H1 (cell line): ENCODE measurements at regions of chr15 and their contacts with region 1.

Region 1: DNA sequence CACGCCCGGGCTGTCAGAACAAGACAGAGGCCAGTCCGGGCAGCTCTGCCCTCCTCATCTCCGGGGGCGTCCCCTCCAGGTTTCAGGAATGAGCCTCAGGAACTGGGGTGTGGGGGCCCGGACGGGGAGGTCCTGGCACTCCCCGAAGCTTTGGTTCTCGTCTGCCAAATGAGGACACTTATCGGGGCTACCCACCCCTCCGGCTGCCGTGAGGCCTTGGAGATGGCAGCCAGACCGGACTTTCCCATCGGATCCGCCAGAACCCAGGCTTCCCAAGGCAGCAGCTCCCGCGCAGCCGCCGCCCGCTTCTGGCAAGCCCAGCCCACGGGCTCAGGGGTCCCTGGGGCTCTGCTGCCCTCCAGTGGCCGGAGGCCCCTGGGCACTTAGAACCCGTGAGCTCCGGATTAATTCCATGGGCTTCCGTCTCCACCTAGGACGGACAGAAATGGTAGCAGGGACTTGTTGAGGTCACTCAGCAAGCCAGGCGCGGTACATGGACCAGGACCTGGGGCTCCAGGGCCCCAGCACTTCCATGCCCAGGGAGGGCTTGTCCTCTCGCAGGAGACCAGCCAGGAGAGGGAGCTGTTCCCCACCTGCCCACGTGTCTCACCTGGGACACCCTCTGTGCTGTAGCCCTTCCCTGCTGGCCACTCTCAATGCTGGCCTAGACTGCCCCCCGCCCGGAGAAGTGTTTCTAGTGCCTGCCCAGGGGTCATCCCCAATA is 89.4 kb downstream of the LINGO1 start:
- DNase-seq: peak; percentile 72 to 93
- H3K4me3 ChIP-seq: peak overlapping the region in 1 of 4 experiments; percentile 15; a peak in 1 of 8 replicates
- H3K27ac ChIP-seq: no peak overlapping the region
- H3K4me1 ChIP-seq: peaks cover 2 to 15% (median 6%) of the 10 kb centered on the region in 4 experiments
- H3K27me3 ChIP-seq: no peaks in the 10 kb centered on the region
- CTCF ChIP-seq: peak; percentile 64 to 96 (median 95)
- EP300 ChIP-seq: no peak
- POLR2A ChIP-seq: no peak
- RAD21 ChIP-seq: peak; percentile 99

Region 2: DNA sequence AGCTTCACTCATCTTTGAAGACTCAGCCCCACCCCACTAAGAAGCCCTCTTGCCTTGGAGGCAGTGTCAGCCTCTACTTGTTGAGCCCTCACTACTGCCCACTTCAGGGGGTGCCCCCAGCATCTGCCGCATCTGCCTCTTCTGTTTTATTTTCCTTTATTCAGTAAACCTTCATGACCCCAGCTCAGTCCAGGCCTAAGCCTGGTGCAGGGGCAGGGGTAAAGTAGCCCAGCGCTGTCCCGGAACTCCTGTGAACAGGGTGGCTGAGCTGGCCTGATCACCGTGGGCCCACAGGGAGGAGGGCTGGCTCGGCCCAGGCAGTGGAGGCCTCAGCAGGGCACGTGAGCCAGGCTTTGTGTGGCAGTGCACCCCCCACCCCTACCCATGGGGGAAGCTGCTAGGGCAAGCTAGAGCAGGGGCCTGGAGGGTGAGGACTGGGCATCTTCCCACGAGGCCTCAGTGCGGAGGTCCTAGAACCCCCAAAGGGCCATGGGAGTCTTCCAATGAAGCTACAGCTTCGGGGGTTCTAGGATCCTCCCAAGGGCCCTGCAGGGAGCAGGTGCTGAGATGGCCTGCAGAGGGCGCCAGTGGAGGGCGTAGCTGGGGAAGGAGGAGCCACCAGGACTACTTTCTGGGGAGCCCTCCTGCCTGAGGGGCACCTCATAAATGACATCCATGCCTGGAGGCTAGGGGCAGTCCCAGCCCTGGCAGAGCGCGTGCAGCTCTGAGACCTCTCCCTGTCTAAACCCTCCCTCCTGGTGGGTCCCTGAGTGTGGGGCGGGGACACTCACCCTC is 508.4 kb before region 1 on chr15:
- CTCF ChIA-PET with region 1: interaction called, 11 read pairs
- POLR2A ChIA-PET with region 1: no interaction called
- DNase-seq: peak in 1 of 2 experiments; percentile 91
- H3K4me3 ChIP-seq: no peak overlapping the region
- H3K27ac ChIP-seq: no peak overlapping the region
- H3K4me1 ChIP-seq: peaks cover 0 to 21% (median 13%) of the 10 kb centered on the region in 4 experiments; a peak in 5 of 7 replicates
- H3K27me3 ChIP-seq: no peaks in the 10 kb centered on the region; a peak in 1 of 7 replicates
- CTCF ChIP-seq: peak in 2 of 3 experiments; percentile 81 to 84; a peak in 3 of 4 replicates
- EP300 ChIP-seq: no peak
- POLR2A ChIP-seq: no peak
- RAD21 ChIP-seq: peak; percentile 52 to 67

Region 3: DNA sequence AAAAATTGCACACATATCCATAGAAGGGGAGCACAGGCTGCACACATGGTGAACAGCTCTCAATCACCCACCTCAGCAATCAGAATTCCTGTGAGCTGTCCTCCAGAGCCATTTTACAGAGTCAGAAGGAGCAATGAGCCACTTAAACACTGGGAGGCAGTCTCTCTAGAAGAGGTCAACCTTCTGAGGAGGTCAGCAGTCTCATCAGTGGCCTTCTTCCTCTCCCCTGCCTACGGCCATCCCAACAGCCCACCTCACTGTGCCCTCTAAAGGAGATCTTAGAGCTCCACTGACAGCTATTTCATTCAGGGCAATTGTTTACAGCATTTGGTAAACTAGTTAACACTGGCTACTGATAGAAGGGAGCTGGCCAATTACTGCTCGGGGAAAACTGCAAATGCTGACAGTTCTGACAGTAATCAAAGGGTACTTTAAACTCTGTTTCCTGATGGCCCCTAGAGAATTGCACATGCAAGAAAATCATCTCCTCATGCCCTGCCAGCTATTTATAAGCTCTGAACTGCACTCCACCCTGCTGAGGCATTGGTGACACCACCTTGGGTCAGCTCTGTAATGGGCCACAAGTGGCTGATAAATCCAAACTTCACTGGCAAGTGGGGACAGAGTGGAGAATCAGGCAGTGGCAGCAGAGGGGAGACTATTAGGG is 430.4 kb before region 1 on chr15:
- CTCF ChIA-PET with region 1: interaction called, 75 read pairs
- POLR2A ChIA-PET with region 1: no interaction called
- DNase-seq: peak in 1 of 2 experiments; percentile 36
- H3K4me3 ChIP-seq: no peak overlapping the region
- H3K27ac ChIP-seq: no peak overlapping the region
- H3K4me1 ChIP-seq: no peaks in the 10 kb centered on the region; a peak in 2 of 7 replicates
- H3K27me3 ChIP-seq: no peaks in the 10 kb centered on the region
- CTCF ChIP-seq: peak; percentile 3 to 64 (median 35); a peak in 3 of 4 replicates
- EP300 ChIP-seq: no peak
- POLR2A ChIP-seq: no peak
- RAD21 ChIP-seq: peak; percentile 37 to 52

Region 4: DNA sequence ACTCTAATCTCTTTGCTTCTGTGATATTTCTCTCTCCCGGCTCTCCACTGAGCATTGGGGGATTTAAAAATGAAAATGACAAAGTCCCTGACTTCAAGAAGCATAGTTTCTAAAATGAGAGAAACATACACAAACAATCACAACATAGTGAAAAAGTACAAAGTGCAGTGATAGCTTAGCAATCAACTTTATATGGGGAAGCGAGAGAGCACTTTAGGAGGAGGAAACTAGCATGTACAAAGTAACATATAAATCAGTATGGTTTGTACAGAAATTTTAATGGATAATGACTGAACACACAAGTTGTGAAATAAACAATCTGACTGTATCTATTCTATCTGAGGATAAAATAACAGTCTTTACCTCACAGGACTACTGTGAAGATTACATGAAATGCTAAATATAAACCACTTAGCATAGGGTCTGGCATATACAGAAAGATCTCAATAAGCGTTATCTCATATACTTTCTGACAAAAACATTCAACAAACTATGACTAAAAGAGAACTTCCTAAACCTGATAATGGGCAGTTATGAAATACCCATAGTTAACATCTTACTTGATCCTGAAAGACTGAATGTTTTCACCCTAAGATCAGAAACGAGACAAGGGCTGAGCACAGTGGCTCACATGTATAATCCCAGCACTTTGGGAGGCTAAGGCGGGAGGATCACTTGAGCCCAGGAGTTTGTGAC is 184.6 kb before region 1 on chr15:
- CTCF ChIA-PET with region 1: no interaction called
- POLR2A ChIA-PET with region 1: no interaction called
- DNase-seq: no peak
- H3K4me3 ChIP-seq: no peak overlapping the region
- H3K27ac ChIP-seq: no peak overlapping the region
- H3K4me1 ChIP-seq: no peaks in the 10 kb centered on the region
- H3K27me3 ChIP-seq: no peaks in the 10 kb centered on the region
- CTCF ChIP-seq: no peak
- EP300 ChIP-seq: no peak
- POLR2A ChIP-seq: no peak
- RAD21 ChIP-seq: no peak

Region 5: DNA sequence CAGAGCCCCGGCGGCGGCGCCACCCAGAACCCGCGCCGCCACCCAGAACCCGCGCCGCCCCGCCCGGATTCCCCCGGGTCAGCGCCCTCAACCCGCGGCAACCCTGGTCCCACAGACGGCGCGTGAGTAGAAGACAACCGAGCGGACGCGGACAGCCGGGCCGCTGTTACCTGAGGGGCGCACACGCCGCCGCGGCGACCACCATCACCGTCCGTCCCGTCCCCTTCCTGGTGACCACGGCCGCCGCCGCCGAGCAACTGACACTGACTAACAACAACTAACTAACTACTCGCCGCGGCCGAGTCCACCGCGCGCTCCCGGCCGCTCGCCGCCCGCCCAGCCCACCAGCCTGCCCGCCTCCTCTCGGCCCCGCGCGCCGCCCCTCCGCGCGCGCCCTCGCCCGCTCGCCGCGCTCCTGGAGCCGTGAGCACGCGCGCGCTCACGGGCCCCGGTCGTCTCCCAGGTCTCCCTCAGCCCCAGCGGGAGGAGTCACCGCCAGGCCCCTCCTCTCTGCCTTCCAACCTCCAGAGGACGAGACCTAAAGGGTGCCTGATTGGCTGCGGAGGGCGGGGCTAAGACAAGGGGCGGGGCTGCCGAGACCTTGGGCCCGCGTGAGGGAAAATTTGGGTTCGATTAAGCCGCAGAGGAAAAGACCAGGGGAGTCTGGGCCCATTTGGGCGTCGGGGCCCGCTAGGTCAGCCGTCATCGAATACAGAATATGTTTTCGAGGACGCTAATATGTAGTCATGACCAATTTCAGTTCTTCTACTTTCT is 123.3 kb before region 1 on chr15 and contains the start of gene PEAK1:
- CTCF ChIA-PET with region 1: interaction called, 15 read pairs
- POLR2A ChIA-PET with region 1: no interaction called
- DNase-seq: peak; percentile 94 to 98
- H3K4me3 ChIP-seq: peak within 1 kb of the TSS; percentile 86 to 98 (median 94)
- H3K27ac ChIP-seq: peak within 1 kb of the TSS; percentile 90
- H3K4me1 ChIP-seq: peaks cover 0 to 19% (median 9%) of the 10 kb centered on the region in 4 experiments; a peak in 4 of 7 replicates
- H3K27me3 ChIP-seq: no peaks in the 10 kb centered on the region
- CTCF ChIP-seq: no peak
- EP300 ChIP-seq: no peak
- POLR2A ChIP-seq: peak; percentile 32 to 56; a peak in 2 of 3 replicates
- RAD21 ChIP-seq: no peak
- total RNA-seq, gene PEAK1: 41.1 and 44.8 TPM in 2 replicates

Region 6: DNA sequence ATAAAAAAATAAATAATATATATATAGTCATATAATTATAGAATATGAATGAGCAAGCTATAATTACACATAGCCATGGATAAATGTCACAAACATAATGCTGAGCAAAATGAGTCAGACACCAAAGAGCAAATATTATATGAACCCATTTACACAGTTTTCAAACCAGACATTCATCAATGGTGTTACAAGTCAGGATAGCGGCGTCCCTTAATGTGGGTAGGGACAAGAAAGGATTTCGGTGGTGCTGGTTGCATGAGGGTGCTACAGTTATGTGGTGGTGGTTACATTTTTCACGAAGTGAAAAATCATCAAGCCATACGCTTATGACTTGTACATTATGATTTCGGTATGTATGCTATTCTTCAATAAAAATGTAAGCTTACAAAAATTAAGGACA is 22.1 kb before region 1 on chr15:
- CTCF ChIA-PET with region 1: interaction called, 44 read pairs
- POLR2A ChIA-PET with region 1: interaction called, 4 read pairs
- DNase-seq: no peak
- H3K4me3 ChIP-seq: no peak overlapping the region
- H3K27ac ChIP-seq: no peak overlapping the region
- H3K4me1 ChIP-seq: peaks cover 0 to 6% (median 3%) of the 10 kb centered on the region in 4 experiments; a peak in 2 of 7 replicates
- H3K27me3 ChIP-seq: no peaks in the 10 kb centered on the region
- CTCF ChIP-seq: no peak
- EP300 ChIP-seq: no peak
- POLR2A ChIP-seq: no peak
- RAD21 ChIP-seq: no peak

Region 7: DNA sequence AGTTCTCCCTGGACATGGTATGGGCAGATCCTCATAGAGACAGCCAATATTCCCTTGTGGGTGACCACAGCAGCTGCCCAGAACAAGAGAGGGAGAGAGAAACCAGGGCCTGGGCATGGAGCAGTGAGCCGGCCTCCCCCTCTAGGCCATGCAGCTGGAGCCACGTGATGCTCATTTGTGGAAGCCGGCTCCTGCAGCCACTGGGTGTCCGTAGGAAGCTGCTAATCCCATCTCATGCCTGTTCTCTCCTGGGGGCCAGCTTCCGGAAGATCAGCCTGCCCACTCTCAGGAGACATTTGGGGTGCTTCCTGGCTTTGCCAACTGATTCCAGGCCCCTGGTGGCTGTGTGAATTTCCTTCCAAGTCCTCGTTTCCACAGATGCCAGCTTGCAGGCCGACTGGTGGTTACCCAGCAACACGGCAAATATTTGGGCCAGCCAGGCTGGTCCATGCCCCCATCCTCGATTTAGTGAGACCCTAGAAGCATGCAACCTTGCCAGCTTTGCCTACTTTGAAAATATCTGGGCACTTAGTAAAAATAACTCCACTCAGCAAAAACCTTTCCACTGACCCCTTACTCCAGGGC is 34.1 kb after region 1 on chr15:
- CTCF ChIA-PET with region 1: interaction called, 18 read pairs
- POLR2A ChIA-PET with region 1: no interaction called
- DNase-seq: no peak
- H3K4me3 ChIP-seq: no peak overlapping the region
- H3K27ac ChIP-seq: no peak overlapping the region
- H3K4me1 ChIP-seq: peaks cover 0 to 1% (median 0%) of the 10 kb centered on the region in 4 experiments; a peak in 2 of 7 replicates
- H3K27me3 ChIP-seq: no peaks in the 10 kb centered on the region
- CTCF ChIP-seq: no peak
- EP300 ChIP-seq: no peak
- POLR2A ChIP-seq: no peak
- RAD21 ChIP-seq: no peak